ENCODE measurements at regions of chr4 and their contacts with region 1.

Region 1: GRCh38 chr4:139266583-139267257 is 13.3 kb downstream of the MGARP start:
- DNase-seq: peak; percentile 77
- H3K4me3 Mint-ChIP-seq: peak overlapping the region; percentile 37
- H3K27ac Mint-ChIP-seq: peak overlapping the region; percentile 73
- H3K4me1 Mint-ChIP-seq: peaks cover 27% of the 10 kb centered on the region
- H3K27me3 Mint-ChIP-seq: peaks cover 18% of the 10 kb centered on the region

Region 2: GRCh38 chr4:138716559-138717335 is 550.0 kb before region 1 on chr4:
- intact Hi-C with region 1: no loop called
- DNase-seq: no peak
- H3K4me3 Mint-ChIP-seq: no peak overlapping the region
- H3K27ac Mint-ChIP-seq: no peak overlapping the region
- H3K4me1 Mint-ChIP-seq: no peaks in the 10 kb centered on the region
- H3K27me3 Mint-ChIP-seq: no peaks in the 10 kb centered on the region

Region 3: DNA sequence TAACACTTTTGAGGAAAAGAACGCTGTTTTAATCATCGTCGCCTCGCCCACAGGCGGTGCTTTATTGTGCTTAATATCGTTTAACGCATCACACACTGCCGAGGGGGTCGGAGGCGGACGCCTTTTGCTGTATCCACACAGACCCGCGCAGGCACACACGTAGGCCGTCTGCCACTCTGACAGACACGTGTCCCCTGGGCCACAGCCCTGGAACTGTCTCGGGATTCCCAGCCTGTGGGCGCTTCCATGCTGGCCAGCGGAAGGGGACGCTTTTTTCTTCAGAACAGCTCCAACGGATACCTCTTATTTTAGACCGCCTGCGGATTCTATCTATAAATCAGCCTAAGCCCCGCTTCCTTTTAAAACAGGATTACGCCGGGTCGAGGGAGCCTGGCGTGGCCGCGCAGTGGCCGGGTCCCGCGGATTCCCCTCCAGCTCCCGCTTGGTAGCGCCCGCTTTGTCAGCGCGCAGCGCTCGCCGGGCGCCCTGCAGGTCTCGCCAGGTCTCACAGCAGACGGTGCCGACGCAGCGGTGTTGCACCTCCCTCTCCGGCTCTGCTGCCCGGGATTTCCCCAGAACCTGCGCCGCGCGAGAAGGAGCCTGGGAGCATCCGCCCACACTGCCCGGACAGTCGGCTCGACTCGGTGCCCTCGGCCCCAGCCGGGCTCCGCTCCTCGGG is 251.3 kb before region 1 on chr4 and contains the start of gene NOCT:
- intact Hi-C with region 1: loop called (anchors 1 kb)
- DNase-seq: peak; percentile 89
- H3K4me3 Mint-ChIP-seq: peak within 1 kb of the TSS; percentile 89
- H3K27ac Mint-ChIP-seq: peak within 1 kb of the TSS; percentile 93
- H3K4me1 Mint-ChIP-seq: peaks cover 41% of the 10 kb centered on the region
- H3K27me3 Mint-ChIP-seq: no peaks in the 10 kb centered on the region
- total RNA-seq, gene NOCT: 20.3 and 22.1 TPM in 2 replicates

Region 4: DNA sequence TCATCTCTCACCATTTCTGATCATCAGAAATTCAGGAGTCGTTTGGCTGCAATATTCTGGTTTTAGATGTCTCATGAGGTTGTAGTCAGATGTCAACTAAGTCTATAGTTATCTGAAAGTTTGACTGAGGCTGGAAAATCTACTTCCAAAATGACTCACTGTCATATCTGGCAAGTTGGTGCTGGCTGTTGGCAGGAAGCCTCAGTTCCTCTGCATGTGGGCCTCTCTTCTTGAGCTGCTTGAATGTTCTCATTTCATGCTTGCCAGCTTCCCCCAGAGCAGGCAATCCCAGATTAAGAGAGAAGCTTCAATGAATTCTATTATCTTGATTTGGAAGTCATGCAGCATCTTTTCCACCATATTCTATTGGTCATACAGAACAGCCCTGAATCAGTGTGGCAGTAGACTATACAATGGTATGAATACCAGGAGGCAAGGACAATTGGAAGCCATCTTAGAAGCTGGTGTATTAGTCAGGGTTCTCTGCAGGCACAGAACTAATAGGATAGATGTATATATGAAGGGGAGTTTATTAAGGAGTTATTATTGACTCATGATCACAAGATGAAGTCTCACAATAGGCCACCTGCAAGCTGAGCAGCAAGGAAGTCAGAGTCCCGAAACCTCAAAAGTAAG is 42.9 kb before region 1 on chr4:
- intact Hi-C with region 1: loop called (anchors 1 kb)
- DNase-seq: no peak
- H3K4me3 Mint-ChIP-seq: no peak overlapping the region
- H3K27ac Mint-ChIP-seq: no peak overlapping the region
- H3K4me1 Mint-ChIP-seq: peaks cover 10% of the 10 kb centered on the region
- H3K27me3 Mint-ChIP-seq: no peaks in the 10 kb centered on the region

Region 5: GRCh38 chr4:139279760-139280620 is 13.3 kb after region 1 on chr4 and contains the start of gene MGARP:
- intact Hi-C with region 1: loop called (anchors 2 kb)
- DNase-seq: no peak
- H3K4me3 Mint-ChIP-seq: peak within 1 kb of the TSS; percentile 72
- H3K27ac Mint-ChIP-seq: no peak within 1 kb of the TSS
- H3K4me1 Mint-ChIP-seq: peaks cover 14% of the 10 kb centered on the region
- H3K27me3 Mint-ChIP-seq: peaks cover 67% of the 10 kb centered on the region
- total RNA-seq, gene MGARP: not detected in 2 replicates

Region 6: GRCh38 chr4:139301113-139301820 is 34.5 kb after region 1 on chr4 and contains the start of gene NAA15:
- intact Hi-C with region 1: loop called (anchors 1 kb)
- DNase-seq: peak; percentile 98
- H3K4me3 Mint-ChIP-seq: peak within 1 kb of the TSS; percentile 98
- H3K27ac Mint-ChIP-seq: peak within 1 kb of the TSS; percentile 99
- H3K4me1 Mint-ChIP-seq: peaks cover 48% of the 10 kb centered on the region
- H3K27me3 Mint-ChIP-seq: no peaks in the 10 kb centered on the region
- total RNA-seq, gene NAA15: 86.7 and 97.4 TPM in 2 replicates

Region 7: GRCh38 chr4:139530833-139531427 is 264.2 kb after region 1 on chr4:
- intact Hi-C with region 1: no loop called
- DNase-seq: peak; percentile 24
- H3K4me3 Mint-ChIP-seq: no peak overlapping the region
- H3K27ac Mint-ChIP-seq: no peak overlapping the region
- H3K4me1 Mint-ChIP-seq: peaks cover 8% of the 10 kb centered on the region
- H3K27me3 Mint-ChIP-seq: no peaks in the 10 kb centered on the region

Region 8: GRCh38 chr4:139606600-139607501 is 340.1 kb after region 1 on chr4:
- intact Hi-C with region 1: no loop called
- DNase-seq: no peak
- H3K4me3 Mint-ChIP-seq: peak overlapping the region; percentile 41
- H3K27ac Mint-ChIP-seq: no peak overlapping the region
- H3K4me1 Mint-ChIP-seq: peaks cover 15% of the 10 kb centered on the region
- H3K27me3 Mint-ChIP-seq: peaks cover 16% of the 10 kb centered on the region